SK-N-SH (cell line): ENCODE measurements at regions of chr21 and their contacts with region 1.

Region 1: GRCh38 chr21:40120940-40121575 is 253.8 kb downstream of the PCP4 start:
- DNase-seq: peak; percentile 40
- H3K4me3 ChIP-seq: peak overlapping the region in 1 of 2 experiments; percentile 53; a peak in 1 of 4 replicates
- H3K27ac ChIP-seq: no peak overlapping the region
- H3K4me1 ChIP-seq: no peaks in the 10 kb centered on the region
- H3K27me3 ChIP-seq: no peaks in the 10 kb centered on the region
- CTCF ChIP-seq: peak; percentile 47
- EP300 ChIP-seq: no peak
- RAD21 ChIP-seq: peak; percentile 87

Region 2: DNA sequence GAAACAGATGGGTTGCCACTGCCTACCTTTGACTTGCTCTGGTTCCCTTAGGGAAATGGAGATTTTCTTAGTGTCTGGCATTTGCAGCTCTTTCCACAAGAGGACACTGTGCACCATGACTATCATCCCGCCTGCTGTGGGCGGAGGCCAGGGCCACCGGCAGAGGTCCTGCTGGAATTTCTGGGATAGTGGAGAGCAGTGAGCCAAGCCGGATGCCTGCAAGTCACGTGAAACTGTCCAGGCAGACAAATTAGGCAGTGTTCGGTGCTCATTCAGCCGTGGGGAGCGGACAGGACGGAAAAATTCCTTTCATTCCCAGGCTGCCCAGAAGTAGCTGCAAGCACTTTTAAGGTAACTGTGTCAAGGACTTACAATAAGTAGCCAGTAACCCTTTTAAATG is 332.7 kb before region 1 on chr21:
- CTCF ChIA-PET with region 1: interaction called, 32 read pairs
- POLR2A ChIA-PET with region 1: no interaction called
- DNase-seq: peak; percentile 75
- H3K4me3 ChIP-seq: no peak overlapping the region
- H3K27ac ChIP-seq: no peak overlapping the region
- H3K4me1 ChIP-seq: no peaks in the 10 kb centered on the region; a peak in 1 of 4 replicates
- H3K27me3 ChIP-seq: no peaks in the 10 kb centered on the region
- CTCF ChIP-seq: peak; percentile 26; the same call in 1 of the 2 replicates
- EP300 ChIP-seq: no peak
- RAD21 ChIP-seq: peak; percentile 89

Region 3: DNA sequence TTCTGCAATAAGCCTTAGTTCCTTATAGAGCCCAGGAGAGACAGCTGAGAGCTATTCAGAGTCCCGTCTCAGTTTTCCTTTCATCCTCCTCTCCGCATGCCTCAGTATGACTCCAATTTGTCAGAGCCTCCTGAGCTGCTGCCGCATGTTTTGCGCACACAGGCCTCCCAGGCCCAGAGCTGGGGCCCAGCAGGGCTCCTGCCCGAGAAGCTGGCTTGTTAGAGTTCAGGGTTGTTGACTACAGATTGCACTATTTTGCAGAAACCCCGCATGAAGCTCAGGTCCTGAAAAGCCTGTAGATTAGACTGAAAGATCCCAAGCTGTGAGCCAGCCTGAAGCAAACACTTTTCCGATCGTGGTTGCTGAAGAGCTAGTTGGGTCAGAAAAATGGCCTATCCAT is 324.6 kb before region 1 on chr21:
- CTCF ChIA-PET with region 1: interaction called, 12 read pairs
- POLR2A ChIA-PET with region 1: no interaction called
- DNase-seq: no peak
- H3K4me3 ChIP-seq: no peak overlapping the region
- H3K27ac ChIP-seq: no peak overlapping the region
- H3K4me1 ChIP-seq: no peaks in the 10 kb centered on the region
- H3K27me3 ChIP-seq: no peaks in the 10 kb centered on the region
- CTCF ChIP-seq: no peak
- EP300 ChIP-seq: no peak
- RAD21 ChIP-seq: no peak

Region 4: GRCh38 chr21:40496116-40496515 is 375.1 kb after region 1 on chr21:
- CTCF ChIA-PET with region 1: no interaction called
- POLR2A ChIA-PET with region 1: no interaction called
- DNase-seq: no peak
- H3K4me3 ChIP-seq: no peak overlapping the region
- H3K27ac ChIP-seq: no peak overlapping the region
- H3K4me1 ChIP-seq: no peaks in the 10 kb centered on the region
- H3K27me3 ChIP-seq: no peaks in the 10 kb centered on the region
- CTCF ChIP-seq: no peak
- EP300 ChIP-seq: no peak
- RAD21 ChIP-seq: no peak